GM23248 (cell line): ENCODE measurements at regions of chr7 and their contacts with region 1.

Region 1: DNA sequence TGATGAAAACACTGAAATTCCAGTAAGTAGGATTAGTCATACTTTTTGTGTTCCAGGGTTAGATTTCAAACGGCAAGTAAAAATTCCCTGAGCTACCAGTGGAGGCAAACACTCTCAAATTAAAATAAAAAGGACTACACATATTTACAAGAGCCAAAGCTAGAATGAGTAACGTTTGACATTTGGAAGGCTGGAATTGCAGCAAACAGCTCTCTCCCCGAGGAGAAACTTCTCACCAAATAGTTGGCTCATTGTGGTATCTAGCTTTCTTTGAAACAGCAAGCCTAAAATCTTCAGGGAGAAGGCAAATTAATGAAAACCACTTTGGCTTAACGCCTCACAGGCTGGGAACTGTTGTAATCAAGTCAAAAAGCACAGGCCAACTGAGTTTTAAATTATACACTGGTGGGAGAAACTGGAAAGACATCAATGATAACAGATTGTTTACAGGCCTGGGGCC is 288.3 kb downstream of the SNX13 start:
- DNase-seq: peak; percentile 93
- H3K4me3 ChIP-seq: no peak overlapping the region
- H3K27ac ChIP-seq: peak overlapping the region; percentile 91
- H3K4me1 ChIP-seq: peaks cover 32% of the 10 kb centered on the region
- H3K27me3 ChIP-seq: no peaks in the 10 kb centered on the region

Region 2: GRCh38 chr7:16982640-16983350 is 669.2 kb before region 1 on chr7:
- in situ Hi-C with region 1: loop called (anchors 25 kb)
- DNase-seq: peak; percentile 72
- H3K4me3 ChIP-seq: no peak overlapping the region
- H3K27ac ChIP-seq: no peak overlapping the region
- H3K4me1 ChIP-seq: peaks cover 23% of the 10 kb centered on the region
- H3K27me3 ChIP-seq: no peaks in the 10 kb centered on the region

Region 3: GRCh38 chr7:18086165-18087030 is 434.4 kb after region 1 on chr7:
- in situ Hi-C with region 1: no loop called
- DNase-seq: peak; percentile 47
- H3K4me3 ChIP-seq: peak overlapping the region; percentile 78
- H3K27ac ChIP-seq: no peak overlapping the region
- H3K4me1 ChIP-seq: peaks cover 4% of the 10 kb centered on the region; the same call in 1 of the 2 replicates
- H3K27me3 ChIP-seq: peaks cover 30% of the 10 kb centered on the region

Region 4: DNA sequence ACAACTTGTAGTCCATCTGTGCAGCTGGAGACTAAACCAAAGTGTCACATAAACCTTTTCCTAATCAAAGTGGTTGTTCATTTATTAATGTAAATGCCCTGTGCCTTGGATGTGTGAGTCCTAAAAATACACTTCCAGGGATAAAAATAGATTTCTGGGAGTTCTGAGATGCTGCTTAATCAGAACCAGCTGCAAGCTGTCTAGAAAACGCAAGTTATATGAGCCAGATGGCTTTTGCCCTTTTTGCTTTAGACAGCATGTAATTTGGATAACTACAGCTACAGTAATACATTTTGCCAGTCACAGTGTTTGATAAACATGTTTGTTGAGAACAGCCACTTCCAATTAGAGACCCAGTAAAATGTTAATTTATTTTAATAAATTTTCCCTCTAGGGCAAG is 560.8 kb after region 1 on chr7:
- in situ Hi-C with region 1: no loop called
- DNase-seq: peak; percentile 68
- H3K4me3 ChIP-seq: no peak overlapping the region
- H3K27ac ChIP-seq: no peak overlapping the region
- H3K4me1 ChIP-seq: peaks cover 13% of the 10 kb centered on the region; the same call in 1 of the 2 replicates
- H3K27me3 ChIP-seq: no peaks in the 10 kb centered on the region